Activated naive CD4-positive, alpha-beta T cell treated with anti-CD3 and anti-CD28 coated beads for 36 hours (primary cell): ENCODE measurements at regions of chr19 and their contacts with region 1.

Region 1: GRCh38 chr19:31054430-31054829 is 294.8 kb downstream of the TSHZ3 start:
- DNase-seq: peak; percentile 62
- H3K4me3 Mint-ChIP-seq: no peak overlapping the region
- H3K27ac Mint-ChIP-seq: no peak overlapping the region
- H3K4me1 Mint-ChIP-seq: no peaks in the 10 kb centered on the region
- H3K27me3 Mint-ChIP-seq: peaks cover 21% of the 10 kb centered on the region

Region 2: GRCh38 chr19:30674656-30675055 is 379.8 kb before region 1 on chr19:
- CTCF ChIA-PET with region 1: no interaction called
- intact Hi-C with region 1: no loop called
- DNase-seq: no peak
- H3K4me3 Mint-ChIP-seq: no peak overlapping the region
- H3K27ac Mint-ChIP-seq: no peak overlapping the region
- H3K4me1 Mint-ChIP-seq: no peaks in the 10 kb centered on the region
- H3K27me3 Mint-ChIP-seq: peaks cover 18% of the 10 kb centered on the region

Region 3: GRCh38 chr19:30896554-30896953 is 157.9 kb before region 1 on chr19:
- CTCF ChIA-PET with region 1: no interaction called
- intact Hi-C with region 1: no loop called
- DNase-seq: no peak
- H3K4me3 Mint-ChIP-seq: no peak overlapping the region
- H3K27ac Mint-ChIP-seq: no peak overlapping the region
- H3K4me1 Mint-ChIP-seq: no peaks in the 10 kb centered on the region
- H3K27me3 Mint-ChIP-seq: peaks cover 2% of the 10 kb centered on the region

Region 4: DNA sequence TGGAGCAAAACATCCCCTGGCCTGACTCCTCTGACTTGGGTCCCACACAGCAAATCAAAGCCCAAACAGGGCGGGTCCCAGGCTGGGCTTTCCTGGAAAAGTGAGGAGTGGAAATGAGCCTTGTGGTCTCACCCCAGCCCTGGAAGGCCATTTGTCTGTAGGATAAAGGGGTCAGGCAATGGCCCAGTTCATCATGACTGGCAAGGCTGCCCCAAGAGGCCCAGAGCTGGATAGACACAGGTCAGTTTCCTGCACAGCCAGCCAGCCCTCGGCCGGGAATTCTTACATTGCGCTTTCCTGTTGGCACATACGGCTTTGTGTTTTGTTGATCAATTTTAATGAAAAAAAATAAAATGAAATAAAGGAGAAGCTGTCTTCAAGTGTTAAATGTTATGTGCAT is 120.5 kb after region 1 on chr19:
- CTCF ChIA-PET with region 1: no interaction called
- intact Hi-C with region 1: no loop called
- DNase-seq: no peak
- H3K4me3 Mint-ChIP-seq: no peak overlapping the region
- H3K27ac Mint-ChIP-seq: no peak overlapping the region
- H3K4me1 Mint-ChIP-seq: no peaks in the 10 kb centered on the region
- H3K27me3 Mint-ChIP-seq: peaks cover 10% of the 10 kb centered on the region

Region 5: GRCh38 chr19:31338069-31338776 is 283.8 kb after region 1 on chr19:
- CTCF ChIA-PET with region 1: no interaction called
- intact Hi-C with region 1: loop called (anchors 5 kb)
- DNase-seq: peak; percentile 59
- H3K4me3 Mint-ChIP-seq: no peak overlapping the region
- H3K27ac Mint-ChIP-seq: no peak overlapping the region
- H3K4me1 Mint-ChIP-seq: peaks cover 29% of the 10 kb centered on the region
- H3K27me3 Mint-ChIP-seq: peaks cover 2% of the 10 kb centered on the region